A673 (cell line): ENCODE measurements at regions of chr13 and their contacts with region 1.

Region 1: DNA sequence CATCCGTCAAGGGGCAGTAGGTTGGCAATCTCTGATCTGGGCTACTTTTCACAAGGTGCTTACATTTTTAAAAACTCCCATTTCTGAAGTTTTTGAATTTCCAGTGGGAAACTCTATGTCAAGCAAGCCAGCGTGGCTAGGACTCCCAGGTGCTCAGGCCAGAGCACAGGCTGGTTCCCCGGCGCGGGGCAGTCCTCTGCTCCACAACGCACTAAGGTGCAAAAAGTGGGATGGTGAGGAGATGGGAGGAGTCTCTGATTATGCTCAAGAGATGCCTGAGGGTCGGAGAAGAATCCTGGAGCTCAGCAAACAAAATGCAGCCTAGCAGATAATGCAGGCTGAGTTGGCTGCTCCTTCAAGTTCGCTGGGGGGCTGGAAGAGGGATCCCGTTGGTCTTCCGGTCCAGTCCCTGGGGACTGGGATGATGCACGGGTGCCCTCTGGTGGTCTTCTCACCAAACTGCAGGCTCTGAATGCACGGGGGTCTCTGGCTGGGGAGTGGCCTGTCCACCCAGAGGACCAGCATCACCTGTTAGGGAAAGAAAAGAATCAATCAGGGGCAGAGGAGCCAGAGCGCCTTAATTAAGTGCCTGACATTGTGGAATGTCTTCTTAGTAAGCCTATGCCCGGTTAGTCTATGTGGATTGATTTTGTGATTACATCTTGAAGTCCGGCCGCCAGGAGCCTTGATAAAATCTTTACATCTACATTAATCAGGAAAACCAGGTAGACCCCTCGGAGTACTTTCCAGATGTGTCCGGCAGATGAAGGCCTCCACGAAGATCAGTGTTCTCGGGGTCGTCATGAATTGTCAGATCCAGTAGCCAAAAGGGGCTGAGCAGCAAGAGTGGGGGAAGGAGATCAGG is 244.4 kb upstream of the MAB21L1 start:
- DNase-seq: peak; percentile 74
- H3K4me3 ChIP-seq: no peak overlapping the region
- H3K27ac ChIP-seq: no peak overlapping the region
- H3K4me1 ChIP-seq: no peaks in the 10 kb centered on the region
- H3K27me3 ChIP-seq: no peaks in the 10 kb centered on the region
- CTCF ChIP-seq: peak; percentile 95

Region 2: GRCh38 chr13:35210261-35210660 is 510.7 kb before region 1 on chr13:
- CTCF ChIA-PET with region 1: interaction called, 3 read pairs
- POLR2A ChIA-PET with region 1: no interaction called
- intact Hi-C with region 1: loop called (anchors 10 kb)
- DNase-seq: no peak
- H3K4me3 ChIP-seq: no peak overlapping the region
- H3K27ac ChIP-seq: no peak overlapping the region
- H3K4me1 ChIP-seq: no peaks in the 10 kb centered on the region
- H3K27me3 ChIP-seq: no peaks in the 10 kb centered on the region
- CTCF ChIP-seq: no peak

Region 3: GRCh38 chr13:35630551-35631275 is 90.2 kb before region 1 on chr13:
- CTCF ChIA-PET with region 1: no interaction called
- POLR2A ChIA-PET with region 1: no interaction called
- intact Hi-C with region 1: loop called (anchors 5 kb)
- DNase-seq: peak; percentile 66
- H3K4me3 ChIP-seq: no peak overlapping the region
- H3K27ac ChIP-seq: no peak overlapping the region
- H3K4me1 ChIP-seq: no peaks in the 10 kb centered on the region
- H3K27me3 ChIP-seq: no peaks in the 10 kb centered on the region
- CTCF ChIP-seq: peak; percentile 79